HEK293T (cell line): ENCODE measurements at regions of chr7 and their contacts with region 1.

Region 1: GRCh38 chr7:19713676-19714075 is 4.8 kb upstream of the POLR1F start:
- DNase-seq: peak; percentile 7

Region 2: DNA sequence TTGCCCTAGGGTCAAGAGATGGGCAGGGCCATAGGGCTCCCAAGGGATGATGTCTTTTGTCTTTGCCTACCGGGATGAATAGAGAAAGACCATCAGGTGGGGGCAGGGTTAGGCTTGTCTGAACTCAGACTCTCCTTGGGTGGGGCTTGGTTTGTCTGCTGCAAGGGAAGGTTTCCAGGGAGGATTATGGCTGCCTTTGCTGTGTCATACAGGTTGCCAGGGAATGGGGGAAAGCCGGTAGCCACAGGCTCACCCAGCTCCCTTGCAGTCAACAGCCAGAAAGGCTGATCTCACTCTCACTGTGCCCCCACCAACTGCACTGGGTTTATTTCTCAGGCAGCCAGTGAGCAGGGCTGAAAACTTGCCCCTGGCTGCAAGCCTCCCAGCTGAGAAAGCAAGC is 258.1 kb before region 1 on chr7:
- CTCF ChIA-PET with region 1: no interaction called
- POLR2A ChIA-PET with region 1: no interaction called
- DNase-seq: no peak

Region 3: GRCh38 chr7:19747740-19748339 is 34.2 kb after region 1 on chr7:
- CTCF ChIA-PET with region 1: interaction called, 17 read pairs
- POLR2A ChIA-PET with region 1: no interaction called
- DNase-seq: peak; percentile 39

Region 4: DNA sequence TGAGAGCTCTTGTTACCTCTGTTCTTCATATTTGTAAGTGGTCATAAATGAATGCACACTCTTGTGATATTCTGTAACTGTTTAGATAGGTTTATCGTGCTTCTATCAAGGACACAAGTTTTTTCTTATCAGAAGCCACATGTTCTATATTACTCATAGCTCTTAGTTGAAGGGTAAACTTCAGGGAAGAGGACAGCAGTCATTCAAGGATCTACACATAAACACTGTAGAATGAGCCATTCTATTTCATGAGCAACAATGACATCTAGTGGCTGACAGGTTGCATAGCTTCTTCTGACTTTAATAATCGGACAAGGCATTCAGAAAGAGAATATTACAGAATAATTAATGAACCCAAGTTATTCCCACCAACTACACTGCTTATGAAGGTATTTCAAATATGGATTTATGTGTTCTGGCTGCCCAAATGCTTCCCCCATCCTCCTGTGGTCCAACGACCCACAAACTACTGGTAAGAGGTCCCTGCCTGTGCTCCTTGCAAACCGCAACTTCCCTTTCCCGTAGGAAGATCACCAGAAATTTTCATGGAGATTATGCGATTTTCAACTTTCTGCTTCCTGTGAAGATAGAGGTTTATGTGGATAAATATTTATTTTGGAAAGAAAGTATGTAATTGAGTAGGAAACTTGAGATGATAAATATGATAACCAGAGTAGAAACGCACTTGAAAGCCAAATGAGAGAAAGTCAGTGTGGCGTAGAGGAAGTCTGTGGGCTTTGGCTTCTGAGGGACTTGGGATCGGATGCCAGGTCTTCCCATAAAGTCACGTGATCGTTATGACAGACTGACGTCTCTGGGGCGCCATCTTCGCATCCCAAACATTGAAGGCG is 885.0 kb after region 1 on chr7:
- CTCF ChIA-PET with region 1: interaction called, 26 read pairs
- POLR2A ChIA-PET with region 1: no interaction called
- DNase-seq: peak; percentile 49